Caco-2 (cell line): ENCODE measurements at regions of chr7 and their contacts with region 1.

Region 1: DNA sequence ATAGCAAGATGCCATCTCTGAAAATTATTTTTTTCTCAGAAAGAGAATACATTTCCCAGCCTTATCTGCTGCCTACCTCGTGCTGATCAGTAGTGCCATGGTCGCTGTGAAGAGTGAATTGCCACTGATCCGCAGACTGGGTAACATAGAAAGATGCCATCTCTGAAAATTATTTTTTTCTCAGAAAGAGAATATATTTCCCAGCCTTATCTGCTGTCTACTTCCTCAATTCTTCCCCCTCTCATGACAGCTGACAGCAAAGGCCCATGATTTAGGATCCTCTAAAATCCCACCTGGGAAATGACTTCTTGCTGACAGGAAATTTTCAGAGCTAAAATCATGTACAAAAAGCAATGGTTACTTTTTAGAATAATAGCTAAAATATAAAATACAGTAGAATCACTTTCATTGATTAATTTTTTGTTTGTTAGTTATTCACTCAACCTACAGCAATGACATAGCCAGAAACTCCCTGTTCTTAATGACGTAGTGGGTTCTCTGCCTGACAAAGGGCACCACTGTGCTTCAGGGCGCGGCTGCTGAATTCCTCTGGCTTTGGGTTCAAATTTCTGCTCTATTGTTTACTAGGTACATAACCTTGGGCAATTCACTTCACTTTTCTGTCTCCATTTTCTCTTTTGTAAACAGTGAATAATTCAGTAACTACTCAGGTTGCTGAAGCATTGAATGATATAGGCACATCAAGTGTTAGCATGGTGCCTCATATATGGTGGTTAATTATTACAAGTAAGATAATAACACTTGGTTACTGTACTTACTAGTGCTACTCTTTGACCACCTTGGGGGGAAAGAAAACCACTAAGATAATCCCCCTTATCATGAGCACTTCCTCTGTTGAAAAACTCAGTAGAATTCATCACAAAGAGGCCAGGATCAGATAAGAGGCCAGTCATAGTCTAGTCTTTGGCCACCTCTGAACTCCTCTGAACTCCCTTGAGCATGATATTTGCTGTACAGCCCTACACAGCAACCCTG is 92.2 kb upstream of the AHR start:
- DNase-seq: peak; percentile 75 to 90
- H3K4me3 ChIP-seq: no peak overlapping the region
- H3K4me3 Mint-ChIP-seq: no peak overlapping the region
- H3K27ac Mint-ChIP-seq: peak overlapping the region; percentile 34
- H3K4me1 ChIP-seq: peaks cover 28% of the 10 kb centered on the region
- H3K4me1 Mint-ChIP-seq: peaks cover 16% of the 10 kb centered on the region
- H3K27me3 ChIP-seq: no peaks in the 10 kb centered on the region
- H3K27me3 Mint-ChIP-seq: no peaks in the 10 kb centered on the region
- CTCF ChIP-seq: no peak

Region 2: DNA sequence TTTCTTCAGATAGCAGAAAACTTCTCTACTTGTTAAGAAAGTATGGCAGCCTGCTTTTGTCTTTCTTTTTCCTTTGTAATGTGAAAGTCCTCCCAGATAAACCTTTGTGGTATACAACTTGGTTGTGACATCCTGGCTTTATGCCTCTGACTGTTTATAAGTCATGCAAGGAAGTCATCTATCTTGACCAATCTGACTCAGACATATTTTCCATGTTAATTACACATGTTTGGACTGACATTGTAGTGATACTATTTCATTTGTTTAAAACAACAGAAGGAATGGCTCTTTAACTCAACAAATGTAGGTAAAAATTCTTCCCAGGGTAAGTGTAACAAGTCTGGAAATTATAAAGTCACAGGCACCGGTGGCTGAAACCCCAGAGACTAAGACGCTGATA is 1178.1 kb before region 1 on chr7:
- CTCF ChIA-PET with region 1: no interaction called
- POLR2A ChIA-PET with region 1: no interaction called
- intact Hi-C with region 1: no loop called
- DNase-seq: no peak
- H3K4me3 ChIP-seq: no peak overlapping the region
- H3K4me3 Mint-ChIP-seq: no peak overlapping the region
- H3K27ac Mint-ChIP-seq: no peak overlapping the region
- H3K4me1 ChIP-seq: no peaks in the 10 kb centered on the region; the same call in 1 of the 2 replicates
- H3K4me1 Mint-ChIP-seq: no peaks in the 10 kb centered on the region
- H3K27me3 ChIP-seq: no peaks in the 10 kb centered on the region
- H3K27me3 Mint-ChIP-seq: peaks cover 2% of the 10 kb centered on the region
- CTCF ChIP-seq: no peak

Region 3: GRCh38 chr7:17185690-17186070 is 20.5 kb before region 1 on chr7:
- CTCF ChIA-PET with region 1: no interaction called
- POLR2A ChIA-PET with region 1: no interaction called
- intact Hi-C with region 1: loop called (anchors 1 kb)
- DNase-seq: no peak
- H3K4me3 ChIP-seq: no peak overlapping the region
- H3K4me3 Mint-ChIP-seq: no peak overlapping the region
- H3K27ac Mint-ChIP-seq: no peak overlapping the region
- H3K4me1 ChIP-seq: no peaks in the 10 kb centered on the region
- H3K4me1 Mint-ChIP-seq: peaks cover 17% of the 10 kb centered on the region
- H3K27me3 ChIP-seq: no peaks in the 10 kb centered on the region
- H3K27me3 Mint-ChIP-seq: no peaks in the 10 kb centered on the region
- CTCF ChIP-seq: no peak

Region 4: GRCh38 chr7:17239683-17240521 is 33.7 kb after region 1 on chr7:
- CTCF ChIA-PET with region 1: no interaction called
- POLR2A ChIA-PET with region 1: no interaction called
- intact Hi-C with region 1: loop called (anchors 1 kb)
- DNase-seq: peak; percentile 39 to 72
- H3K4me3 ChIP-seq: no peak overlapping the region
- H3K4me3 Mint-ChIP-seq: no peak overlapping the region
- H3K27ac Mint-ChIP-seq: peak overlapping the region; percentile 14
- H3K4me1 ChIP-seq: peaks cover 45% of the 10 kb centered on the region
- H3K4me1 Mint-ChIP-seq: peaks cover 38% of the 10 kb centered on the region
- H3K27me3 ChIP-seq: no peaks in the 10 kb centered on the region
- H3K27me3 Mint-ChIP-seq: no peaks in the 10 kb centered on the region
- CTCF ChIP-seq: no peak